Activated CD4-positive, alpha-beta memory T cell treated with anti-CD3 and anti-CD28 coated beads, Interleukin-2, amount 10 ng/mL, durations not matched to agents 7 days and 5 days (primary cell): ENCODE measurements at regions of chr15 and their contacts with region 1.

Region 1: DNA sequence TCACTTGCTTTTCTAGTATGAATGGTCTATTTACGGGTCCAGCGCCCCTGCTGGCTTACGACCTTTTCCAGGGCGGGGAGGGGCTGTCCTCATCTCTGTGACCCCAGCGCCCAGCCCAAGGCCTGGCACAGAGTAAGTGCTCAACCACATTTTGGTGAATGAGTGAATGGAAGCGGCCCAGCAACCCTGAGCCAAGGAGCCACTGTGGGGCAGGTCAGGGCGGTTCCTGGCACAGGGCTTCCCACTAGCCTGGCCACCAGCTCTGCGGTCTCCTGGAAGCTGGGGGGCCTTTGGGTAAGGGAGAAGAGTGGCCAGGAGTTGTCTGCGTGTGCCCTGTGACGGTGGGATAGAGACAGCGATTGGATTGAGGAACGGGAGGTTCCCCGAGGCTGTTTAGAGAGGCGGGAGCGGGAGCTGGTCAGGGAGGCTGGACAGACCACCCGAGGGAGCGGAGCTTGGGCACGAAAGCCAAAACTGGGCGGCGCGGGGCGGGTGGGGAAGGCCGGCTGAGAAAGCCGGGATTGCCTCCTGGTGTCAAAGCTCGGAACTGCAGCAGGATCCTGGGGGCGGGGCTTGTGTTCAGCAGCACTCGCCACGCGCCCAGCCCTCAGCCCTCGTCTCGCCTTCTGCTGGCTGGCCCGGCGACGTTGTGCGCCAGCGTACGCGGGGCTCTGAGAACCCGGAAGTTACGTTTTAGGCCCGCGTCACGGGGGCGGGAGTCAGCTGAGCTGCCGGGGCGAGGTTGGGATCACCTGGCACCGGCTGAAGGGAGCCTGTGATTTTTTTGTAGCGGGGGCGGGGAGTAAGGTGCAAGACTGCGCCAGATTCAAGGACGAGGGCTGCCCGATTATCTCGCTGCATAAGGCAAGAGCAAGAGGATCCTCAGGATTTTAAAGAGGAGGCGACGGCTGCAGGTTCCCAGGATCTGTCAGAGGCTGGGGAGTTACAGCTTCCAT is at the start of gene VPS18:
- DNase-seq: peak; percentile 99
- H3K4me3 Mint-ChIP-seq: peak within 1 kb of the TSS; percentile 97
- H3K27ac Mint-ChIP-seq: peak within 1 kb of the TSS; percentile 93
- H3K4me1 Mint-ChIP-seq: peaks cover 36% of the 10 kb centered on the region
- H3K27me3 Mint-ChIP-seq: peaks cover 4% of the 10 kb centered on the region
- total RNA-seq, gene VPS18: 16.3 to 17.1 TPM

Region 2: DNA sequence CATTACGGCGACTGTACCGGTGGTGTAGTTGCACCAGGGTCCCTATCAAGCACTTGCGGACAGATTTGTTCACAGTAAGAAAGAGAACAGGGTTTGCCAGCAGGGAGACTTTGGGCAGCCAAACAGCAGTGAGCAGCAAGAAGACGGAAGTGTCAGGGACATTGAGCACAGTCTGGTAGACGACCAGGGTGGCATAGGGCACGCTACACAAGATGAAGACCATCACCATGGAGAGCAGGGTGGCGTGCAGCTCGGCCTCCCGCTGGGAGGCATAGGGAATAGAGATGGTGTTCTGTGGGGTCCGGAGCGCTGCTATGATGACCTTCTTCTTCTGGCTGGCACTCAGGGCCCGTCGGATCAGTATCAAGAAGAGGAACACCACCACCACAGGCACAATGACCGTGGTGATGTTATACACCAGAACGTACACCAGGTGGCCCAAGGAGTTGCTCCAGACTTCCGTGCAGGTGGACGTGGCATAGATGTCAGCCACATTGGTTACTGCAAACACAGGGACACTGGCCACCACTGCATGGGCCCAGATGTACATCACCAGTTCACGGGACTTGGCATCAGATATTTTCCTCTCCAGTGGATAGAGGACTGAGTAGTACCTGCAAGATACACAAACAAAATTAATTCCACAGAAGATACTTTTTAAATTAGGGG is 1092.2 kb before region 1 on chr15:
- CTCF ChIA-PET with region 1: no interaction called
- POLR2A ChIA-PET with region 1: no interaction called
- DNase-seq: peak; percentile 23
- H3K4me3 Mint-ChIP-seq: no peak overlapping the region
- H3K27ac Mint-ChIP-seq: no peak overlapping the region
- H3K4me1 Mint-ChIP-seq: no peaks in the 10 kb centered on the region
- H3K27me3 Mint-ChIP-seq: peaks cover 19% of the 10 kb centered on the region

Region 3: DNA sequence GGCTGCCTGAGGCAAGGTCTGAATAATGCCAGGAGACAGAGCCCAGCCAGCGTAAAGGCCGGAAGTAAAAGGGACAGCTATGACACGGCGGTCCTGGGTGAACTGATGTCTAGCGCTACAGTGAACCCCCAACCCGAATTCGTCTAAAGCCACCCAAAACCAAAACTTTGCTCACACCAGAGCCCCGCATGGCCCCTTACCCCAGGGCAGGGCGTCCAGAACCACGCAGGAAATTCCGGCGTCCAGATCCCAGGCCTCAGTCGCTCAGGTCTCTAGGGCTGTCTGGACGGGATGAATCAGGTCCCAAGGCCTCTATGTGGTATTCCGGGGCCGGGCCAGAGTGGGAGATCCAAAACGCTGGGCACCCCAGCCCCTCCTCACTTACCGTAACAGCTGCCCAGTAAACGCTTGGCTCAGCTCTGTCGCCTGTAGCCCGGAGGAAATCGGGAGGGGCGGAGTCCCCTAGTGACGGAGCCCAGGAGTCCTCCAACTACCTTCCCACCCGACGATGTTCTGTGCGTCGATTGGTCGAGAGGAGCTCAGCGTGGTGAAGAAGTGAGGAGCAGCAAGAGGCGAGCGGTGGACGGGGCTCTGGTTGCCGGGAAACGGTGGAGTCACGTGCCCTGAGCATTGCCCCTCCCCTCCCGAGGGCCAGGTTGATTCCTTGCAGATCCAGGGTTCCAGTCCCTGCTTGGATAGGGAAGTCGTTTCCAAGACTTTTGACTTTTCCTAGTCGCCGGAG is 329.2 kb before region 1 on chr15 and contains the start of gene CCDC32:
- CTCF ChIA-PET with region 1: interaction called, 4 read pairs
- POLR2A ChIA-PET with region 1: interaction called, 11 read pairs
- DNase-seq: peak; percentile 97
- H3K4me3 Mint-ChIP-seq: peak within 1 kb of the TSS; percentile 90
- H3K27ac Mint-ChIP-seq: peak within 1 kb of the TSS; percentile 84
- H3K4me1 Mint-ChIP-seq: peaks cover 54% of the 10 kb centered on the region
- H3K27me3 Mint-ChIP-seq: peaks cover 3% of the 10 kb centered on the region
- total RNA-seq, gene CCDC32: 33.2 to 33.7 TPM

Region 4: DNA sequence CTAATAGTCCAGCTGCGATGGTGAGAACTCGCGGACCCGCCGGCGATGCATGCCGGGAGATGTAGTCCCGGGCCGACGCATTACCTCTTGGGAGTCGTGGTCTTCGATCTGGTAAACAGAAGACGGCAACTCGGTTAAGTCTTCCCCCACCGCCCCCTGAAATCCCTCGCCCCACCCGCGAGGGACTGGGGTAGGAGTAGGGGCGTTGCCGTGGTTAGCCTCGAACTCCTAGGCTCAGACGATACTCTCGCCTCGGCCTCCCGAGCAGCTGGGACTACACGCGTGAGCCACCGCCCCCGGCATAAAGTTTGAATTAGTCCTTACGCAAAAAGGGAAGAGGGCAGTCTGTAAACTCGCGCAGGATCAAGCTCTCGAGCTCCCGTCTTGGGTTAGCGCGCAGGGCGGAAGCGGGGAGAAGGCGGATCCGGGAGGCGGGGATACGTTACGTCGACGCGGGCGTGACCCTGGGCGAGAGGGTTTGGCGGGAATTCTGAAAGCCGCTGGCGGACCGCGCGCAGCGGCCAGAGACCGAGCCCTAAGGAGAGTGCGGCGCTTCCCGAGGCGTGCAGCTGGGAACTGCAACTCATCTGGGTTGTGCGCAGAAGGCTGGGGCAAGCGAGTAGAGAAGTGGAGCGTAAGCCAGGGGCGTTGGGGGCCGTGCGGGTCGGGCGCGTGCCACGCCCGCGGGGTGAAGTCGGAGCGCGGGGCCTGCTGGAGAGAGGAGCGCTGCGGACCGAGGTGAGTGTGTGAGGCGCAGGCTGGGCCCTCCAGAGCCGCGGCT is 199.1 kb before region 1 on chr15 and contains the start of gene RAD51:
- CTCF ChIA-PET with region 1: interaction called, 18 read pairs
- POLR2A ChIA-PET with region 1: interaction called, 25 read pairs
- DNase-seq: peak; percentile 95
- H3K4me3 Mint-ChIP-seq: peak within 1 kb of the TSS; percentile 99
- H3K27ac Mint-ChIP-seq: peak within 1 kb of the TSS; percentile 100
- H3K4me1 Mint-ChIP-seq: peaks cover 46% of the 10 kb centered on the region
- H3K27me3 Mint-ChIP-seq: no peaks in the 10 kb centered on the region
- total RNA-seq, gene RAD51: 50.9 to 60.4 TPM

Region 5: DNA sequence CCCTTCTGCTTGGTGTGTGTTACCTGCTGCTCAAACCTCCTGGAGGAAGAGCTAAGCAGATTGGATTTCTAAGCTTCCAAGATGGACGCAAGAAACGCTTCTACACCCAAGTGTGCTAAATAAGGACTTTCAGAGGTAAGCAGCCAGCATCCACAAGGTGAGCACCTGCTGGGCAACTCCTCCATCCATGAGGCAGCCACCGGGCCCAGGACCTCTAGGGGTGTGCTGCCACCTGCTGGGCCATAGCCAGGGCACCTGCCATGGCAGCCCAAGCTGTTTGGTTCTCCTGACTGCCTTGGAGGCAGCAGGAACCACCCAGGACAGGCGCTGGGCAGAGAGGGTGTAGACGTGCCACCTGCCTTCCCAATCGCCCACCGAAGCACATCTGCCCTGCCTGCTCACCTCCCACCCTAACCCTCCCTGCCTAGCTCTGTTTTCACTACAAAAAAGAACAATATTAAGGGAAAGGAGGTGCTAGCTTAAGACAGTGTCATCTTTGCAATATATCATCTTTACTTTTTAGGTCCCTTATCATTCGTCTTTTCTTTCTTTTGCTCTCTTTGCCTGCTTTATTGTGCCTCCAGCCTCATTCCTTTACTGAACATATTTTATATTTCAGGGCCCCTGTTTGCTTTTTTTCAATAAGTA is 111.3 kb before region 1 on chr15:
- CTCF ChIA-PET with region 1: interaction called, 12 read pairs
- POLR2A ChIA-PET with region 1: no interaction called
- DNase-seq: peak; percentile 84
- H3K4me3 Mint-ChIP-seq: no peak overlapping the region
- H3K27ac Mint-ChIP-seq: no peak overlapping the region
- H3K4me1 Mint-ChIP-seq: peaks cover 16% of the 10 kb centered on the region
- H3K27me3 Mint-ChIP-seq: no peaks in the 10 kb centered on the region

Region 6: GRCh38 chr15:40847205-40847961 is 46.6 kb before region 1 on chr15:
- CTCF ChIA-PET with region 1: interaction called, 216 read pairs
- POLR2A ChIA-PET with region 1: interaction called, 14 read pairs
- DNase-seq: no peak
- H3K4me3 Mint-ChIP-seq: no peak overlapping the region
- H3K27ac Mint-ChIP-seq: no peak overlapping the region
- H3K4me1 Mint-ChIP-seq: peaks cover 24% of the 10 kb centered on the region
- H3K27me3 Mint-ChIP-seq: peaks cover 18% of the 10 kb centered on the region

Region 7: DNA sequence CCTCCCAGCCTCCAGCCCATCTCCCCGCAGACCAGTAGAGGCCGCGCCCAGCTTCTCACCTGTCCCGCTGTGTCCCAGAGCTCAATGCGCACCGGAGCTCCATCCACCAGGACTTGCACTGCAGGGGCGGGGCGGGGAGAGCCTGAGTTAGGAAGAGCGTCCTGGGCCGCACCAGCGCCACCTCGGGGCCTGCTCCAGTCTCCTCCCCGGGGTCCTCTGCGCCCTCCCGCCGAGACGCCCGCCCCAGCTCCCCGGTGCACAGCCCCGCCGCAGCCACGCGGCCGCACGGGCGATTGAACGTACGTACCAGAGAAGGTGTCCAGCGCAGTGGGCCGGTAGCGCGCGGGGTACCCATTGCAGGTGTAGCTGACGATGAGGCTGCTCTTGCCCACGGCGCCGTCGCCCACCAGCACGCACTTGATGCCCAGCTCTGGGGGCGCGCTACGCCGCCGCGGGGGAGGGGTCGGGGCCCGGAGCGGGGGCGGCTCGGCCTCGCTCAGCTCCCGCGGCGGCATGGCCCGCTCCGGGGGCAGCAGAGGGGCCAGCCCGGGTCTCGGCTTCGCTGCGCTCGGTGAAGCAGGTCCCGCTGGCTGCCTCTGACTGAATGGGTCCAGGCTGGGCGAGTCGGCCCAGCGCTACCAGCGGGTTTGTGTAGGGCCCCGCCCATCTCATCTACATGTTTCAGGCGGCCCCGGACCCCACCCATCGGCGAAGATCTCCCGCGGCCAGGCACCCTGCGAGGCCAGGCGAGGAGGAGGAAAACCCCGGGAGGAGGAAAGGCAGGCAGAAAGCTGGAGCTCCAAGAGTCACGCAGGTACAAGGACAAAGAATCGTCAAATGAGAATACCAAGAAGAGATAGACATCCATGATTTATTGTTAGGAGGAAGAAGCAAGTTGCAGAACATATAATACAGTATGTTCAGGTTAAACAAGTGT is 20.1 kb before region 1 on chr15 and contains the start of gene RHOV:
- CTCF ChIA-PET with region 1: interaction called, 41 read pairs
- POLR2A ChIA-PET with region 1: interaction called, 7 read pairs
- DNase-seq: peak; percentile 44
- H3K4me3 Mint-ChIP-seq: peak within 1 kb of the TSS; percentile 69
- H3K27ac Mint-ChIP-seq: no peak within 1 kb of the TSS
- H3K4me1 Mint-ChIP-seq: peaks cover 20% of the 10 kb centered on the region
- H3K27me3 Mint-ChIP-seq: peaks cover 27% of the 10 kb centered on the region
- total RNA-seq, gene RHOV: not detected

Region 8: DNA sequence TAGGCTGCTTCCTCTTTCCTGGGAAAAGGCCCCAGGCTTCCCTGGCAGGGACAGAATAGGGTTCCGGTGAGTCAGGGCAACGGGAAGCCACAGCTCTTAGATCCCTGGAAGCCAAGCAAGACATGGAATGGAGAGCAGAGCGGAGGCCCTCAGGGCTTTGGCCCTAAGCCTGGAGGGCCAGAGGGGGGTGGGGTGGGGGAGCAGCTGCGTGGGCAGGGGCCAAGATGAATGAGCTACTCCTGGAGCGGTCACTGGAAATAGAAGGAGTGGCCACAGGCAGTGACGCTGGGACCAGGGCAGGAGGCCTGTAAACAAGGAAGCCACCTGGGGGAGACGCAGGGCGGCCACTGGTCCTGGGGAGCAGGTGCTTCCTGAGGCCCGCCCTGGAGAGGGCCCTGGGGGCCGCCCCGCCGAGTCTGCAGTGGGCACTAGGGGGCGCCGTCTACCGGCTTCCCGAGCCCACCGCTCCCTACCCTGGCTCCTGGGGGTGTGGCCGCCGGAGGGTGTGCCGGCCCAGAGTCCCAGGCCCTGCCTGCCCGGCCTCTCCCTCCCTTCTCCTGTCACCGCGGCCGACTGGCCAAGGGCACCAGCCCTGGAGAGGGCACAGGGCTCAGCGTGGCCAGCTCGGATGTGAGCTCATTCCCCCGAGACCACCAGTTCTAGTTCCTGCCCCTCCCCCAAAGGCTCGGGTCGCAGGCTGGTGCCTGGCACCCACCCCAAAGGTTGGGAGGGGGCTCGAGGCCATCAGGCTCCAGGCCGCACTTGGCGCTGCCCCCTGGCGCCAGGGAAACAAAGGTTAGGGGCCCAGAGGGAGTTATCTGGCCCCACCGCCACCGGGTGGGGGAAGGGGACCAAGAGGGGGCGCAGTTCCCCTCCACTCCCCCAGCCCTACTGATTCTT is 12.3 kb after region 1 on chr15:
- CTCF ChIA-PET with region 1: interaction called, 92 read pairs
- POLR2A ChIA-PET with region 1: interaction called, 34 read pairs
- DNase-seq: peak; percentile 76
- H3K4me3 Mint-ChIP-seq: peak overlapping the region; percentile 71
- H3K27ac Mint-ChIP-seq: no peak overlapping the region
- H3K4me1 Mint-ChIP-seq: peaks cover 33% of the 10 kb centered on the region
- H3K27me3 Mint-ChIP-seq: no peaks in the 10 kb centered on the region